ENCODE measurements at regions of chr5 and their contacts with region 1.

Region 1: DNA sequence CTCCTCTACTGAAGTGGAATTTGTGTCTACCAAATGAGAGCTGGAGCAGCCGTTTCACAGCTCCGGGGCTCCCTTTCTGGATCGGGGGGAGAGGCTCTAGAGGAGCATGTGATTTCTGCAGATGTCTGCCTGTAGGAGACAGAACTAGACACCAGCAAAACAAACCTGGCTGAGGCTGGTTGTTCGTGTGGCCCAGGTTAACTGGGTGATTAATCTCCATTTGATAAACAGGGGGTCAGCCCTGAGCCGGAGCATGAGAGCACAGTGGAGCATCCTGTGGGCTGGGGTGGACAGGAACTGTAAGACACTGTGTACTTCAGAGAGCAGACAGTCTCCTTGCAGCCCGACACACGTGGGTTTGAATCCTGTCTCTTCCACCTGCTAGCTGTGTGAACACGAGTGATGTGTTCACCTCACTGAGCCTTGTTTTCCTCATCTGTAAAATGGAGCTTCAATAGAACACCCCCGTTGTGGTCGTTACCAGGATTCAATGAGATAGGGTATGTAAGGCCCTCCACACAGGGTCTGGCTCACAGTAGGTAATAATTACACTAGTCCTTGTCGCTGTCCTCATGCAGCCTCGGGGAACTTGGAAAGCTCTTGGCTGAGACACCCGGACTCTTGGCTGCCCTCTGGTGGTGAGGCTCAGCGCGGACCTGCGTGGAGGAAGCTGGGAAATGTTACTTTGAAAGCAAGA is 12.9 kb downstream of the CXCL14 start:
- DNase-seq: peak; percentile 92
- H3K4me3 Mint-ChIP-seq: no peak overlapping the region
- H3K27ac Mint-ChIP-seq: no peak overlapping the region
- H3K4me1 Mint-ChIP-seq: peaks cover 2% of the 10 kb centered on the region
- H3K27me3 Mint-ChIP-seq: peaks cover 14% of the 10 kb centered on the region
- CTCF ChIP-seq: peak; percentile 93

Region 2: GRCh38 chr5:135085127-135085935 is 480.5 kb before region 1 on chr5:
- CTCF ChIA-PET with region 1: no interaction called
- intact Hi-C with region 1: no loop called
- DNase-seq: no peak
- H3K4me3 Mint-ChIP-seq: no peak overlapping the region
- H3K27ac Mint-ChIP-seq: no peak overlapping the region
- H3K4me1 Mint-ChIP-seq: no peaks in the 10 kb centered on the region
- H3K27me3 Mint-ChIP-seq: peaks cover 32% of the 10 kb centered on the region
- CTCF ChIP-seq: no peak

Region 3: GRCh38 chr5:135457424-135458071 is 108.3 kb before region 1 on chr5:
- CTCF ChIA-PET with region 1: interaction called, 26 read pairs
- intact Hi-C with region 1: no loop called
- DNase-seq: peak; percentile 82
- H3K4me3 Mint-ChIP-seq: no peak overlapping the region
- H3K27ac Mint-ChIP-seq: no peak overlapping the region
- H3K4me1 Mint-ChIP-seq: peaks cover 15% of the 10 kb centered on the region
- H3K27me3 Mint-ChIP-seq: peaks cover 48% of the 10 kb centered on the region
- CTCF ChIP-seq: peak; percentile 82

Region 4: GRCh38 chr5:135551593-135552447 is 14.1 kb before region 1 on chr5:
- CTCF ChIA-PET with region 1: interaction called, 57 read pairs
- intact Hi-C with region 1: no loop called
- DNase-seq: peak; percentile 79
- H3K4me3 Mint-ChIP-seq: no peak overlapping the region
- H3K27ac Mint-ChIP-seq: no peak overlapping the region
- H3K4me1 Mint-ChIP-seq: peaks cover 8% of the 10 kb centered on the region
- H3K27me3 Mint-ChIP-seq: peaks cover 76% of the 10 kb centered on the region
- CTCF ChIP-seq: peak; percentile 82

Region 5: DNA sequence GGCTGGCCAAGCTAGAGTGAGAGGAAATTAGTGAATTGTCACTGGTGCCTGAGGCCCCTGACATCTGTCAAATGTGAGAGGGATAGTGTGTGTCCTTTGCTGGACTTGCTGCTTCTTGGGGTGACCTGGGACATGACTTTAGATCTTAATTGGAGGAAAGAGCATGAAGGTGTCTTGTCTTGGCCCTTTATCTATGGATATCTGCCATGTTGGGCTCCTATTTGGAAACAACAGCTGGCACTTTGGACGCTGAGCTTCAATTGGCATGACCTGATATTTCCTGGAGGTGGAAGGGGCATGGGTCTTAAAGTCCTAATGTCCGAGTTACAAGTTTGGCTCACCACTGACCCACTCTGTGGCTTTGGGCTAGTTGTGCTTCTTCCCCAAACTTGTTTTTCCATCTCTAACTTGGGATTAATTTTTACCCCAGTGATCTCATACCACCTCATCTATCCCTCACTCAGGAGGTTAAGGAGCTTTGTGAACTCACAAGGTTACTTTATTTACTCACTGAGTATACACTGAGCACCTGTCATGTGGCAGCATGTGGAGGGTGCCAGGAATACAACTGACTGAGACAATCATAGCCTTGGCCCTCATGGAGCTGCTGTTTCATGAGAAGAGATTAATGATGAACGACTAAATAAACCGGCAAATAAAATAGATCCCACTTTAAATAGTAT is 43.0 kb after region 1 on chr5:
- CTCF ChIA-PET with region 1: interaction called, 12 read pairs
- intact Hi-C with region 1: no loop called
- DNase-seq: peak; percentile 24
- H3K4me3 Mint-ChIP-seq: no peak overlapping the region
- H3K27ac Mint-ChIP-seq: peak overlapping the region; percentile 48
- H3K4me1 Mint-ChIP-seq: peaks cover 23% of the 10 kb centered on the region
- H3K27me3 Mint-ChIP-seq: peaks cover 35% of the 10 kb centered on the region
- CTCF ChIP-seq: no peak

Region 6: GRCh38 chr5:135729321-135729786 is 163.5 kb after region 1 on chr5:
- CTCF ChIA-PET with region 1: interaction called, 34 read pairs
- intact Hi-C with region 1: loop called (anchors 1 kb)
- DNase-seq: no peak
- H3K4me3 Mint-ChIP-seq: no peak overlapping the region
- H3K27ac Mint-ChIP-seq: no peak overlapping the region
- H3K4me1 Mint-ChIP-seq: no peaks in the 10 kb centered on the region
- H3K27me3 Mint-ChIP-seq: peaks cover 26% of the 10 kb centered on the region
- CTCF ChIP-seq: no peak